GM12878 (cell line): ENCODE measurements at regions of chr15 and their contacts with region 1.

Region 1: DNA sequence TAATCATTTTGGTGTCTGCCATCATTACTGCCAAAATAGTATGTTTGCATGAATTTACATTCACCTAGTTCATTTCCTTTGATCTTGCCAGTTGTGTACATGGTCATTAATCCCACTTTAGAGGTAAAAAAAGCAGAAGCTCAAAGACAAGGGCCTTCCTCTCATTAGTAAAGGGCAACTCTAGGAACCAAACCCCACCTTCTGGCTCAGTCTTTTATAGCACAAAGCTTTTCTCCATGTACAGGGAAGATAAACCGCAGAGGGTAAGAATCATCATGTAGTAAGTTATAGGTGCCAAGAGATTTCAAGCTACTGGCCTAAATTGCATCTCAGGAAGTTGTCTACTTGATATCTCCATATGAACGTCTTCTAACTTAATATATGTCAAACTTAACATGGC is 19.3 kb upstream of the SPG21 start:
- DNase-seq: no peak
- ATAC-seq: peak; percentile 56; the same call in 2 of the 3 replicates
- H3K4me3 ChIP-seq: no peak overlapping the region
- H3K27ac ChIP-seq: no peak overlapping the region
- H3K4me1 ChIP-seq: no peaks in the 10 kb centered on the region
- H3K27me3 ChIP-seq: no peaks in the 10 kb centered on the region
- CTCF ChIP-seq: peak in 2 of 3 experiments; percentile 23 to 46; a peak in 3 of 6 replicates
- EP300 ChIP-seq: no peak
- POLR2A ChIP-seq: no peak
- RAD21 ChIP-seq: peak; percentile 50

Region 2: GRCh38 chr15:64989416-64990167 is 19.4 kb before region 1 on chr15 and contains the start of gene SPG21:
- CTCF ChIA-PET with region 1: interaction called, 11 read pairs
- POLR2A ChIA-PET with region 1: interaction called, 3 read pairs
- RAD21 ChIA-PET with region 1: interaction called, 6 read pairs
- SMC1A ChIA-PET with region 1: interaction called, 11 read pairs
- in situ Hi-C with region 1: no loop called
- intact Hi-C with region 1: no loop called
- DNase-seq: peak; percentile 91
- ATAC-seq: peak; percentile 95
- H3K4me3 ChIP-seq: peak within 1 kb of the TSS; percentile 82
- H3K27ac ChIP-seq: peak within 1 kb of the TSS; percentile 92
- H3K4me1 ChIP-seq: peaks cover 4% of the 10 kb centered on the region
- H3K27me3 ChIP-seq: no peaks in the 10 kb centered on the region
- CTCF ChIP-seq: no peak
- EP300 ChIP-seq: peak in 1 of 2 experiments; percentile 84; a peak in 2 of 4 replicates
- POLR2A ChIP-seq: peak; percentile 85
- RAD21 ChIP-seq: no peak
- polyA plus RNA-seq, gene SPG21: 25.5 to 29.6 TPM

Region 3: GRCh38 chr15:65020419-65020818 is 11.4 kb after region 1 on chr15:
- CTCF ChIA-PET with region 1: interaction called, 16 read pairs
- POLR2A ChIA-PET with region 1: interaction called, 3 read pairs
- RAD21 ChIA-PET with region 1: no interaction called
- SMC1A ChIA-PET with region 1: interaction called, 19 read pairs
- in situ Hi-C with region 1: no loop called
- intact Hi-C with region 1: no loop called
- DNase-seq: no peak
- ATAC-seq: peak; percentile 54; the same call in 2 of the 3 replicates
- H3K4me3 ChIP-seq: no peak overlapping the region
- H3K27ac ChIP-seq: no peak overlapping the region
- H3K4me1 ChIP-seq: no peaks in the 10 kb centered on the region
- H3K27me3 ChIP-seq: no peaks in the 10 kb centered on the region
- CTCF ChIP-seq: no peak
- EP300 ChIP-seq: no peak
- POLR2A ChIP-seq: no peak
- RAD21 ChIP-seq: no peak

Region 4: DNA sequence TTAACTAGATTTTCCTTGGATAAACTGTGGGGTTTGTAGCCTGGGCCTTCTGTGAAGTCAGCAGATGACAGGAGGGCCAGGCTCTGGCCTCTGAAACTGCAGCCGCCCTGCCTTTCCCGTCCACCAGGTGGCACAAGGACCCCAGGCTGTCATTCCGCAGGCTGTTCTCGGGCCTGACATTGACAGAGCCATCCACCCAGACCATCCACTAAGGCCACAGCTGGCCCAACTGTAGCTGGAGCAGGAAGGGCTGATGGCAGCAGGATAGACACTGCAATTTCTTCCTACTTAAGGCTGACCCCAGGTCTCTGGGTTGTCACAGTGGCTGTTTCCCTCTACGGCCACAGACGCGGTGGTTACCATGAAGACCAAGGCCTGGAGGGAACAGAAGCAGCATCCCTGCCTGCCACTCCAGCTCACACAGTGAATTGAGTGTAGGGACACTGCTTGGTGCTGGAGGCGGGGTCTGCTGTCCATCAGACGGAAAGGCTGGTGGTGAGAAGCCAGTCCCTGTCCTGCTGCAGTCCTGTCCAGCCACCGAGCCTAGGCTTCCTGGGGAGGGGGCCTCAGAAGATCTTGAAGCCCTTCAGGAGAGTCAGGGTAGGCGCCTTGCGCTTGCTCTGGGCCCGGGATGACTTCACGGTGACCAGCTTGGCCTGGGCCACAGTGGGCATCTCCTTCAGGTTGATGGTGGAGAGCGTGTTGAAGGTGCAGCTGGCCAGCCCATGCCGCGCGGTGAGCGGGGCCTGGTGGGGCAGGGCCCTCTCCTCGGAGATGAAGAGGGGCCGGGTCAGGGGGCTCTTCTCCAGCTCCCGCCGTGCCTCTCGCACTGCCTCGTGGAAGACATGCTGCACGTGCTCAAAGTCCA is 45.6 kb after region 1 on chr15:
- CTCF ChIA-PET with region 1: no interaction called
- POLR2A ChIA-PET with region 1: no interaction called
- RAD21 ChIA-PET with region 1: no interaction called
- SMC1A ChIA-PET with region 1: no interaction called
- in situ Hi-C with region 1: no loop called
- intact Hi-C with region 1: no loop called
- DNase-seq: no peak
- ATAC-seq: peak; percentile 82
- H3K4me3 ChIP-seq: no peak overlapping the region
- H3K27ac ChIP-seq: no peak overlapping the region
- H3K4me1 ChIP-seq: peaks cover 6% of the 10 kb centered on the region
- H3K27me3 ChIP-seq: no peaks in the 10 kb centered on the region
- CTCF ChIP-seq: peak; percentile 89 to 93 (median 89)
- EP300 ChIP-seq: no peak
- POLR2A ChIP-seq: no peak
- RAD21 ChIP-seq: peak; percentile 84